Cardiac septum (tissue), 1 donor: ENCODE measurements at regions of chr20 and their contacts with region 1.

Region 1: DNA sequence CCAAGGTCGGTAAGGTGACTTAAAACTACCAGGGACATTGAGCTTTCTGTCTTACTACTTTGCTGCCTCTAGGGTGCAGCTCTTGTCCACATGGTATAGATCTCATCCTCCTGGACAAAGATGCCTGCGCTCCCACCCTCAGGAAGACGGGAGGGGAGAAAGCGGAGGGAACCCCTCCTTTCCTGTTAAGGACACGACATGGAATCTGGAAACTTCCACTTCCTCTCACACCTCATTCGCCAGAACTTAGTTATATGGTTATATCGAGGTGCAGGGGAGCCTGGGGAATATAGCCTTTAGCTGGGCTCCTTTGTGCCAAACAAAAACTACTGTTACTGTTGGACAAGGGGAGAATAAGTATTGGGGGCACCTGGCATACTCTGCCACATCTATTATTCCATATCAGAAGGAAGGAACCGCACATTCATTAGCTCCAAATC is 224.3 kb upstream of the TSHZ2 start:
- DNase-seq: no peak

Region 2: GRCh38 chr20:52905241-52905994 is 157.6 kb after region 1 on chr20:
- intact Hi-C with region 1: no loop called
- DNase-seq: no peak

Region 3: DNA sequence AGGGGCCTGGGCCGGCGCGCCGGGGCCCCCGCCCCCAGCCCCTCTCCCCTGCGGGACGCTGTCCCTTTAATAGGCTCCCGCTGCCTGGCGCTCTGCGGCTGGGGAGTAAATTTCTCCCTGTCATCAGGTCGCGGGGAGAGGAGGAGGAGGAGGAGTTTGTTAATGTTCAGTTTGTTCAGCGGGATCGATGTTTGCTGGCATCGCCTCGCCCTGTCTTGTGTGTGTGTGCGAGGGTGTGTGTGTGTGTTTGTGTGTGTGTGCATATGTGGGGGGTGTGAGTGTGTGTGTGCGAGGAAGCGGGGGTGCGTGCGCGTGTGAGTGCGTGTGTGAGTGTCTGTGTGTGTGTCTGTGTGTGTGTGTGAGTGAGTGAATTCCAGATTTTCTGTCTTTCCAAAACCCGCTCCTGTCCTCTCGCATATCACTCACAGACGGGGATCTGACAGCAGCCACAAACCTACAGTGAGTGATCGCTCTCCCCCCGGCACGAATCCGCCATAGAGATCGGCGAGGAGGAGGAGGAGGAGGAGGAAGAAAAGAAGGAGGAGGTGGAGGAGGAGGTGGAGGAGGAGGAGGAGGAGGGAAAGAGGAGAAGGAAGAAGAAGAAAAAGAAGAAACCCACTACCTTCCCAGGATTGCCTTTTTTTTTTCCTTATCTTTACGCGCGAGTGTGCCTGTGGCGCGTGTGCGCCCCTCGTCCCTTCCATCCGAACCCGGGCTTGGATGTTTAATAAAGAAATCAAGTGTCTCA is 224.5 kb after region 1 on chr20 and contains the start of gene TSHZ2:
- intact Hi-C with region 1: loop called (anchors 5 kb)
- DNase-seq: no peak
- total RNA-seq, gene TSHZ2: 7.5 TPM

Region 4: DNA sequence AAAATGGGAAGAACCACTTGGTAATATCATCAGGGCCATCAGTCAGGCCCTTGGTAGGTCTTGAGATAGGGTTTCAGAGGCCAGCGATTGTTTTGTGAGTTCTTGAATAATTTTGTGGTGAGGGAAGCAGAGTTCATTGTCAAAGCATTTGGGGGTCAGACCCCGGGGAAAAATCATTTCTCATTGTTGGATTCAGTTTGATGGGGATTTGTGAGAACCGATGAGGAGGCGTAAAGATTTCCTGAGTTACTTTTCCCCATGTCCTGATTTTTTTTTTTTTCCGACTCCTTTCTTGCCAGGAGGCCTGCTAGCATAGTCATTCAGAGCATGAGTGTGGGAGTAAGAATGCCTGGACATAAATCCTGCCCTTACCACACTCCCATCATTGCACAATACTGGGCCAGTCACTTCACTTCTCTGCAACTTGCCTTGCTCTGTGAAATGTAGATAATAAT is 284.6 kb after region 1 on chr20:
- intact Hi-C with region 1: loop called (anchors 10 kb)
- DNase-seq: no peak